ENCODE measurements at regions of chr10 and their contacts with region 1.

Region 1: DNA sequence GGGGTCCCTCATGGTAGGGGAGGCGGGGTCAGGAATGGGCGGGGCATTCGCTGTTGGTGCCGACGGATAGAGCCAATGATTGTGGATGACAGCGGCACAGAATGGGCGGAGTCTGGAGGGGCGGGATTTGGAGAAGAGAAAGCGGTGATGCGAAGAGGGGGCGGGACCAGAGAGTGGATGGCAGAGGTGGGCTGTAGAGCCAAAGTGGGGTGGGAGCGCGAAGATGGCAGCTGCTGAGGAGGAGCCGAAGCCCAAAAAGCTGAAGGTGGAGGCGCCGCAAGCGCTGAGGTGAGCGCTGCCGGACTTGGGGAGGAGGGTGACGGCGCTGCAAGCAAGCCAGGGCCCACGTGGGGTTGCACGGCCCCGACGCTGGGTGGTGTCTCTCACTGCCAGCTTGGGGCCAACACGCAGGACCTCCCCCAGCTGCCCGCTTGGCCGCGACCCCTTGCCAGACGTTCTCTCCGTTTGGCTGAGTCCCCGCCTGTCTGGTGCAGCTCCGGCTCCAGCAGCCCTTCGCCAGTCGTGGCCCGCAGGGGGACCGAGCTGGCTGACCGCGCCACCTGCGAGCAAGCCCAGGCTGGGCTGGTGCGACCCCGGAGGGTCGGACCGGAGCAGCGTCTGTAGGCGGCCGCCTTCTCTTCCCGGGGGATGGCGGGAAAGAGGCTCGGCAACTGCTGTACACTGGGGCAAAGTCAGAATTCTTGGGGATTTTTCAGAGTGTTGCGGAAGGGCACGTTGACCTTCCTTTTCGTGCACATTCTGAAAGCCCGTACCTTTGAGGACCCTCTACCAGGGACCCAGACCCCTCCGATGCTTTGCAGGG is at the start of gene ADK:
- DNase-seq: peak; percentile 89 to 99
- H3K4me3 ChIP-seq: peak within 1 kb of the TSS; percentile 93
- H3K27ac ChIP-seq: peak within 1 kb of the TSS; percentile 70
- H3K4me1 ChIP-seq: peaks cover 26% of the 10 kb centered on the region
- H3K27me3 ChIP-seq: no peaks in the 10 kb centered on the region
- CTCF ChIP-seq: peak; percentile 53; the same call in 1 of the 2 replicates
- total RNA-seq, gene ADK: 133 and 159 TPM in 2 replicates

Region 2: DNA sequence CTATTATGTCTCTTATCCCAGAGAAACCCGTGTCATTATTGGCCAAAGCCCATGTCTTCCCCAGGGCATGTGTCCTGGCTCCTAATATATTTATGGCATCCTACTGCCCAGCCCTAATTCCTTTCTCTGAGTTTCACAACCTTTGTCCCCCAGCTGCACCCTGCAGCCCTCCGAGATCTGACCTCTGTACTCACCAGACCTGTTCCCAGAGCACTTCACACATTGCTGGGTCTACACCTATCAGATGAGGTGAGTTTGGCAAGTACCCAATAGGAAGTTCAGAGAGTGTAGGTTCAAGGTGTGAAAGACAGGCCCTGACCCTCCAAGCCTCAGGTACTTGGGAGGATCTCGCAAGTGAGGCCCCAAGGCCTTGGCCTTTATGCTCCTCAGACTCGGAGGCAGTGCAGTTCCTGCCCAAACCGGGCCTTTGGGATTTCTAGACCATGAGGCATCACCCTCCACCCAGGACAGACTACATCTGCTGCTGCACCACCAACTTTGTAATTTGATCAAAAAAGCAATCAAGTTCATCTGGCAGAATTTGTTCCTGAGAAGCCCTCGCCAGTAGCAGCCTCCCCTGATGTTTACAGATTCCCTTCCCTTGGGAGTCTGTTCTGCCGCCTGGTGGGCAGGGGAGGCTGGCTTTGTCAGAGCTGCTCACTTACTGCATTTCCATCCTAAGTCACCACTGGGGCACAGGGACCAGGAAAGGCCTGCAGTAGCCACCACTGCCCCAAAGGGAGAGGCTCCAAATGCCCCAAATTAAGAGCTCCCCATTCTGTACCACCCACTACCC is 279.2 kb before region 1 on chr10:
- CTCF ChIA-PET with region 1: no interaction called
- POLR2A ChIA-PET with region 1: no interaction called
- intact Hi-C with region 1: loop called (anchors 1 kb)
- DNase-seq: peak; percentile 94 to 100
- H3K4me3 ChIP-seq: peak overlapping the region; percentile 64
- H3K27ac ChIP-seq: peak overlapping the region; percentile 88
- H3K4me1 ChIP-seq: peaks cover 75% of the 10 kb centered on the region
- H3K27me3 ChIP-seq: no peaks in the 10 kb centered on the region
- CTCF ChIP-seq: peak; percentile 58; the same call in 1 of the 2 replicates

Region 3: GRCh38 chr10:74176380-74177139 is 25.3 kb after region 1 on chr10:
- CTCF ChIA-PET with region 1: interaction called, 3 read pairs
- POLR2A ChIA-PET with region 1: interaction called, 3 read pairs
- intact Hi-C with region 1: loop called (anchors 1 kb)
- DNase-seq: peak; percentile 91 to 97
- H3K4me3 ChIP-seq: peak overlapping the region; percentile 90
- H3K27ac ChIP-seq: peak overlapping the region; percentile 79
- H3K4me1 ChIP-seq: peaks cover 33% of the 10 kb centered on the region
- H3K27me3 ChIP-seq: no peaks in the 10 kb centered on the region
- CTCF ChIP-seq: no peak

Region 4: GRCh38 chr10:74213571-74214162 is 62.4 kb after region 1 on chr10:
- CTCF ChIA-PET with region 1: no interaction called
- POLR2A ChIA-PET with region 1: no interaction called
- intact Hi-C with region 1: loop called (anchors 1 kb)
- DNase-seq: peak; percentile 50 to 52
- H3K4me3 ChIP-seq: no peak overlapping the region
- H3K27ac ChIP-seq: peak overlapping the region; percentile 64
- H3K4me1 ChIP-seq: 0 out of 2 replicates have a peak, but pooled peaks cover 12% of the 10 kb centered on the region
- H3K27me3 ChIP-seq: no peaks in the 10 kb centered on the region
- CTCF ChIP-seq: peak; percentile 74

Region 5: GRCh38 chr10:74234569-74234968 is 83.3 kb after region 1 on chr10:
- CTCF ChIA-PET with region 1: interaction called, 3 read pairs
- POLR2A ChIA-PET with region 1: interaction called, 4 read pairs
- intact Hi-C with region 1: loop called (anchors 1 kb)
- DNase-seq: no peak
- H3K4me3 ChIP-seq: no peak overlapping the region
- H3K27ac ChIP-seq: 0 out of 2 replicates have a peak overlapping the region, but pooled peaks have one; percentile 38
- H3K4me1 ChIP-seq: peaks cover 18% of the 10 kb centered on the region
- H3K27me3 ChIP-seq: no peaks in the 10 kb centered on the region
- CTCF ChIP-seq: peak; percentile 73

Region 6: GRCh38 chr10:74690393-74690792 is 539.1 kb after region 1 on chr10:
- CTCF ChIA-PET with region 1: no interaction called
- POLR2A ChIA-PET with region 1: interaction called, 10 read pairs
- intact Hi-C with region 1: no loop called
- DNase-seq: no peak
- H3K4me3 ChIP-seq: no peak overlapping the region
- H3K27ac ChIP-seq: no peak overlapping the region
- H3K4me1 ChIP-seq: no peaks in the 10 kb centered on the region
- H3K27me3 ChIP-seq: no peaks in the 10 kb centered on the region
- CTCF ChIP-seq: no peak

Region 7: DNA sequence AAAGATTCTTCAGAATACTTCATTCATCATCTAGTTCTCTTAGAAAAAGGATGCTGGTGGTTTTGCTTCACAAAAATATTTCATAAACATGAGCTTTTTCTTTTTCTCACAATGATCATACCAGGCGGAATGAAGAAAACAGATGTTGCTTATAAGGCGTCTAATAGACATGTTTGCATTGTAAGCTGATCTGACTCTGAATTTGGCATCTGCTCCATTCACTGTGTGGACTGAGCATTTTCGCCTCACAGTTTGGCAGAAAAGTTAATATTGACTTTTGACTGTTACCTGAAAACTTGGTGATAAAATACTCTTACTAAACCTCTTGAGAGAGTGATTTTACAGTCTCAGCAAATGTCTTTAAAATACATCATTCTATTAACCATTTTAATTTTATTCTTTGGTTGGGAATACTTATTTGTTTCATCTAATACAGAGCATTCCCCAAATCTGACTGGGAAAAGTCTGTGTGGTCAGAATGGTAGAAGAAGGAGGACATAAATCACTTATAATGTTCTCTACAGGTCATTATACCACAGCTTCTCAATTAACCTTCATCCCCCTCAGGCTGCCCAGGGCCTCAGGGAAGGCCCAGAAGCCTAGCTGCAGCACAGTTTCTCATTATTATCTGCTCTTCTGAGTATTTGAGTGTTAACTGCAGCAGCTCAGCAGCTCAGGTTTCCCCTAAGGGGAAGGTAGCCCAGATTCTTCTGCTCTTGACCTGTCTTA is 553.5 kb after region 1 on chr10:
- CTCF ChIA-PET with region 1: no interaction called
- POLR2A ChIA-PET with region 1: no interaction called
- intact Hi-C with region 1: no loop called
- DNase-seq: no peak
- H3K4me3 ChIP-seq: no peak overlapping the region
- H3K27ac ChIP-seq: no peak overlapping the region
- H3K4me1 ChIP-seq: no peaks in the 10 kb centered on the region
- H3K27me3 ChIP-seq: no peaks in the 10 kb centered on the region
- CTCF ChIP-seq: no peak